T-cell (primary cell): ENCODE measurements at regions of chr19 and their contacts with region 1.

Region 1: GRCh38 chr19:35013031-35013819 is 13.1 kb downstream of the GRAMD1A start:
- DNase-seq: peak; percentile 60 to 91 (median 80)
- ATAC-seq: peak; percentile 56 to 73 (median 64)
- H3K4me3 ChIP-seq: peak overlapping the region in 1 of 2 donors; percentile 41
- H3K4me3 Mint-ChIP-seq: peak overlapping the region; percentile 67 to 85 (median 76)
- H3K27ac ChIP-seq: peak overlapping the region; percentile 82
- H3K27ac Mint-ChIP-seq: peak overlapping the region; percentile 94 to 100
- H3K4me1 ChIP-seq: peaks cover 25 to 83% of the 10 kb centered on the region in 2 experiments
- H3K4me1 Mint-ChIP-seq: peaks cover 66 to 76% (median 74%) of the 10 kb centered on the region in 3 donors
- H3K27me3 ChIP-seq: no peaks in the 10 kb centered on the region
- H3K27me3 Mint-ChIP-seq: no peaks in the 10 kb centered on the region

Region 2: DNA sequence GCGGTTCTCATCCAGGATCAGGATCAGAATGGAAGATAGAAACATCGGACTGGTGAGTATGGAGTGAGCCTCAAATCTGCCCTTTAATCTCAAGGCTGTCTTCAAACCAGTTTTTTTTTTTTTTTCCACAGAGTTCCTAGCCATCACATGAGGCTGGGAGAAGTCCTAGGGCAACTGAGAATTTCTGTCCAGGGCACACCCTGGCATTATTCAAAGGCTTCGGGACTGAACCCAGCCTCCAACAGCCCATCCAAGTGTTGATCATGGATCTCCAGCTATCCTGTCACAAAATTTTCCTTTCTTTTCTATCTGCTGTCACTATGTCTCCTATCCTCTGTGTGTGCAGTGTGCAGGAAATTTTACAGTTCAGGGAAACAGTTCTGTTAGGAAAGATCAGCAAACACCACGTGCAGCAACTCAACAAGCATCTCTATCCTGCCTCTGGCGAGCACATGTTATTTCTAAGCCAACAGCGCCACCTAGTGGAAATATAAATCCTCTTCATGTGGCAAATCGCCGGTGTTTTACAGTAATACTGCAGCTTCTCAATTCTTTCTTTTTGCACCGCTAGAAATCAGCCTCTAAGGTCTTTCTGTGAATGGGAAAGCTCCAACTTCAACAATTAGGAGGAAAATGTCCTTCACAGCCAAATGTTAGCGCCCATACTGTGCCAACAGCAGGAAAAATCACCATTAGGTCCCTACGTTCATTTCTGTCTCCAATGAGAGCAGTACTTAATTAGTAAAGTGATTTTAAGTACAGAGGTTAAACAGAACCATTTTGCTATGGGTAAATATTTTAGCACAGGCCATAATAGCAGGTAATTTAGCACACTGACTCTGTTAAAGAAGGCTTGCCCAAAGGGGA is 300.6 kb before region 1 on chr19:
- CTCF ChIA-PET with region 1: no interaction called
- POLR2A ChIA-PET with region 1: no interaction called
- DNase-seq: peak in 34 of 35 experiments; percentile 9 to 90 (median 48)
- ATAC-seq: peak; percentile 58 to 67 (median 64)
- H3K4me3 ChIP-seq: no peak overlapping the region
- H3K4me3 Mint-ChIP-seq: no peak overlapping the region
- H3K27ac ChIP-seq: no peak overlapping the region
- H3K27ac Mint-ChIP-seq: no peak overlapping the region
- H3K4me1 ChIP-seq: no peaks in the 10 kb centered on the region
- H3K4me1 Mint-ChIP-seq: no peaks in the 10 kb centered on the region
- H3K27me3 ChIP-seq: peaks cover 0 to 11% of the 10 kb centered on the region in 2 experiments
- H3K27me3 Mint-ChIP-seq: peaks cover 33 to 37% of the 10 kb centered on the region in 2 donors

Region 3: DNA sequence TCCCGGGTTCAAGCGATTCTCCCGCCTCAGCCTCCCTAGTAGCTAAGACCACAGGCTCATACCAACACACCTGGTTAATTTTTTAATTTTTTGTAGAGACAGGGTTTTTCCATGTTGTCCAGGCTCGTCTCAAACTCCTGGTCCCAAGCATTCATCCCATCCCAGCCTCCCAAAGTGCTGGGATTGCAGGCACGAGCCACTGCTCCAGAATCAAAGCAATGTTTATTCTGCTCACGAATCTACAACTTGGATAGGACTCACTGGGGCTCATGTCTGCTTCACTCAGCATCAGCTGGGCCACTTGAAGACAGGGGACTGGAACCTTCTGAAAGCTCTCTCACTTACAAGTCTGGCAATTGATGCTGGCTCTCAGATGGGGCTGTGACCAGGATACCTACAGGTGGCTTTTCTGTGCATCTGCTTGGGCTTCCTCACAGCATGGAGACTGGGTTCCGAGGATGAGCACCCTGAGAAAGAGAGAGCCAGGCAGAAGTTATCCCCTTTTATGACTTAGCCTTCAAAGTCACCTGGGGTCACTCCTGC is 41.0 kb before region 1 on chr19:
- CTCF ChIA-PET with region 1: interaction called in 1 of 2 experiments, 12 read pairs
- POLR2A ChIA-PET with region 1: interaction called in 1 of 2 experiments, 5 read pairs
- DNase-seq: no peak
- ATAC-seq: no peak
- H3K4me3 ChIP-seq: no peak overlapping the region
- H3K4me3 Mint-ChIP-seq: no peak overlapping the region
- H3K27ac ChIP-seq: no peak overlapping the region
- H3K27ac Mint-ChIP-seq: no peak overlapping the region
- H3K4me1 ChIP-seq: peaks cover 10 to 23% of the 10 kb centered on the region in 2 experiments
- H3K4me1 Mint-ChIP-seq: peaks cover 18 to 32% (median 27%) of the 10 kb centered on the region in 3 donors
- H3K27me3 ChIP-seq: no peaks in the 10 kb centered on the region
- H3K27me3 Mint-ChIP-seq: no peaks in the 10 kb centered on the region

Region 4: DNA sequence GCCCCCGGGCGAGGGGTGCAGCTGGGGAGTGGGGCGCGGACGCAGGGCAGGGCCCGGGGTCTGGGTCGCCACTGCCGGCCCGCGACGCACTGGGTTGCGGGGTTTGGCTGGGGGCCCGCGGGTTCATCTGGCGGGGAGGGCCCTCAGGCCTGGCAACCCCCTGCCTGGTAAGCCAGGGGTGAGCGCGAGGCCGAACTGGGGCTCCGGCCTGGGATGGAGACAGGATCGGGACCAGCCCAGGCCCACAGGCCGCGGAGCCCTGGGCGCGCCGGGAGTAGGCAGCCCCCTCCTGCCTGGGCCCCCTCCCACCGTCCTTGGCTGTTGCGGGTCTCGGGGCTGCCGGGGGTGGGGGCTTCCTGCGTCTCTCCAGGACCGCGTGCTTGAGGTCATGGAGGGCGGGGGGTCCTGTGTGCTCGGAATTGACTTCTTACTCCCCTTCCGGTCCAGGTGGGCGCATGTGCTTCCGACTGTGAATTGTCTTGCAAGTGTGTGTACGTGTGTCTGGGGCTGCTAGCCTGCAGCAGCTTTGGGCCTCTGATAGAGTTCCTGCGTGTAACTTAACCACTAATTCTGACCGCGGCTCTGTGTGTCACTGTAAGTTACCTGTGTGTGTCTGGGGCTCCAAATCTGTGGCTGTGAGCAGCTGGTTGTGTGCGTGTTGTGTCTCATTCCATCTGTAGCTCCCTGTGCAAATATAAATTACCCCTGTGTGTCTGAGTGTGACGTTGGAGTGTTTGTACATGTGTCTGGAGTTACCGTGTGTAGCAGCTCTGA is 12.4 kb before region 1 on chr19:
- CTCF ChIA-PET with region 1: interaction called, 4 to 15 read pairs
- POLR2A ChIA-PET with region 1: interaction called in 1 of 2 experiments, 11 read pairs
- DNase-seq: peak; percentile 39 to 80 (median 60)
- ATAC-seq: peak; percentile 35 to 53 (median 37)
- H3K4me3 ChIP-seq: peak overlapping the region; percentile 52 to 63
- H3K4me3 Mint-ChIP-seq: peak overlapping the region; percentile 91 to 98 (median 98)
- H3K27ac ChIP-seq: peak overlapping the region; percentile 73
- H3K27ac Mint-ChIP-seq: peak overlapping the region; percentile 98 to 99
- H3K4me1 ChIP-seq: peaks cover 35 to 87% of the 10 kb centered on the region in 2 experiments
- H3K4me1 Mint-ChIP-seq: peaks cover 73 to 81% (median 78%) of the 10 kb centered on the region in 3 donors
- H3K27me3 ChIP-seq: no peaks in the 10 kb centered on the region
- H3K27me3 Mint-ChIP-seq: no peaks in the 10 kb centered on the region

Region 5: GRCh38 chr19:35170156-35171020 is 157.2 kb after region 1 on chr19:
- CTCF ChIA-PET with region 1: no interaction called
- POLR2A ChIA-PET with region 1: no interaction called
- DNase-seq: no peak
- ATAC-seq: no peak
- H3K4me3 ChIP-seq: no peak overlapping the region
- H3K4me3 Mint-ChIP-seq: no peak overlapping the region
- H3K27ac ChIP-seq: no peak overlapping the region
- H3K27ac Mint-ChIP-seq: peak overlapping the region; percentile 73 to 97
- H3K4me1 ChIP-seq: peaks cover 13 to 40% of the 10 kb centered on the region in 2 experiments
- H3K4me1 Mint-ChIP-seq: peaks cover 58 to 72% (median 60%) of the 10 kb centered on the region in 3 donors
- H3K27me3 ChIP-seq: no peaks in the 10 kb centered on the region
- H3K27me3 Mint-ChIP-seq: no peaks in the 10 kb centered on the region